Psoas muscle (tissue), 8 donors: ENCODE measurements at regions of chr1 and their contacts with region 1.

Region 1: GRCh38 chr1:109133815-109134214 is 19.9 kb downstream of the ELAPOR1 start:
- DNase-seq: peak; percentile 25 to 81
- ATAC-seq: peak; percentile 73 to 95 (median 83)
- H3K4me3 ChIP-seq: no peak overlapping the region
- H3K27ac ChIP-seq: no peak overlapping the region
- H3K4me1 ChIP-seq: peaks cover 8% of the 10 kb centered on the region
- H3K27me3 ChIP-seq: no peaks in the 10 kb centered on the region
- CTCF ChIP-seq: no peak

Region 2: GRCh38 chr1:109181105-109181806 is 47.4 kb after region 1 on chr1:
- intact Hi-C with region 1: loop called in 1 of 2 experiments (anchors 10 kb)
- DNase-seq: no peak
- ATAC-seq: no peak
- H3K4me3 ChIP-seq: no peak overlapping the region
- H3K27ac ChIP-seq: no peak overlapping the region
- H3K4me1 ChIP-seq: no peaks in the 10 kb centered on the region
- H3K27me3 ChIP-seq: no peaks in the 10 kb centered on the region
- CTCF ChIP-seq: no peak